Activated CD8-positive, alpha-beta memory T cell treated with anti-CD3 and anti-CD28 coated beads, Interleukin-2, amount 10 ng/mL, durations not matched to agents 7 days and 5 days (primary cell): ENCODE measurements at regions of chr12 and their contacts with region 1.

Region 1: GRCh38 chr12:25241167-25242020 is 9.3 kb downstream of the KRAS start:
- DNase-seq: peak; percentile 72
- ATAC-seq: peak; percentile 88
- H3K4me3 Mint-ChIP-seq: no peak overlapping the region
- H3K27ac Mint-ChIP-seq: peak overlapping the region; percentile 40
- H3K4me1 Mint-ChIP-seq: peaks cover 32% of the 10 kb centered on the region
- H3K27me3 Mint-ChIP-seq: no peaks in the 10 kb centered on the region

Region 2: DNA sequence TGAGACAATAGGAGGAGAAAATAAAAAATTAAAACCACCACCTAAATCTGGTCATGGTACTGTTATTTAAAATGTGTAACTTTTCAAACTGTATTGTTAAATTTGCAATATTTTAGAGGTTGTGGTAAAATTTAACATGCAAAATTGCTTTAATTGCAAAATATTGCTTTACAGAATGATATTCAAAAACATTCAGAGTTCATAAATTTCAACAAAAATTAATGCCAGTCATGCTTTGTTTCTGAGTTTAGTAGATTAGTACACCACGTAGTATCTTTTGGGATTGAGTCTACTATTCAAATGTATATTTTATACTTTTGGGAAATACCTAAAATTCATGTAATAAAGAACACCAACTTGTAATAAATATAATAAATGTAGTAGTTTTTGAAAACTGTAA is 28.1 kb before region 1 on chr12:
- CTCF ChIA-PET with region 1: interaction called, 12 read pairs
- DNase-seq: no peak
- ATAC-seq: no peak
- H3K4me3 Mint-ChIP-seq: no peak overlapping the region
- H3K27ac Mint-ChIP-seq: no peak overlapping the region
- H3K4me1 Mint-ChIP-seq: peaks cover 1% of the 10 kb centered on the region
- H3K27me3 Mint-ChIP-seq: no peaks in the 10 kb centered on the region

Region 3: GRCh38 chr12:25364529-25365339 is 123.3 kb after region 1 on chr12:
- CTCF ChIA-PET with region 1: interaction called, 12 read pairs
- DNase-seq: peak; percentile 82
- ATAC-seq: peak; percentile 91
- H3K4me3 Mint-ChIP-seq: peak overlapping the region; percentile 67
- H3K27ac Mint-ChIP-seq: peak overlapping the region; percentile 89
- H3K4me1 Mint-ChIP-seq: peaks cover 25% of the 10 kb centered on the region
- H3K27me3 Mint-ChIP-seq: no peaks in the 10 kb centered on the region

Region 4: DNA sequence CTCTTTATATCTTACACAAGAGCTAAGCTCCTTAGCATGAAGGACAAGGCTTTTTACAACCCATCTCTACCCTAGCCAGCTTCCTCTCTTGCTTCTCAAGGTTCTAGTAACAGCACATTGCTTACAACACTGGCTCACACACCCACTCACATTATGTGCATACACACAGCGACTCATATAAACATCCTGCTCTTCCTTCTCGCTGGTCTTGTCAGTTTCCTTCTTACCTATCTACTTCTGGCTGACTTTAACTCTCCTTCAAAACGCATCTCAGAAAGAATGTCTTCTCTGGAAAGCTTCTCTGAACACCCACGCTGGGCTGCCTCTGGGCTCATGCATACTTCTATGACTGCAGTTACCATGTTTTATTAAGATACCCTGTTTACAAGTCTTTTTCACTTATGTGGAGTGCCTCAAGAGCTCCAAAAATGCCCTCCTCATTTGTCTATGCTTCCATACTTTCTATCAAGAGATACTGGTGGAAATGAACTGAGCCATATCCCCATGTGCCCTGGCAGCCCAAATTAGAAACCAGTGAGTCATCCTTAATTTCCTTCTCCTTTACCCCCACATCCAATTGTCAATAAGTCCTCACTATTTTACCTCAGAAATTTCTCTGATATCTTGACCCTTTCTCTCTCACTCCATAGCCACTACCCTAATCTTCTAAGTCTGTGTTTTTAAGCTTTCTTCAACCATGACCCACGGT is 136.2 kb after region 1 on chr12:
- CTCF ChIA-PET with region 1: interaction called, 17 read pairs
- DNase-seq: peak; percentile 69
- ATAC-seq: peak; percentile 85
- H3K4me3 Mint-ChIP-seq: peak overlapping the region; percentile 5
- H3K27ac Mint-ChIP-seq: peak overlapping the region; percentile 83
- H3K4me1 Mint-ChIP-seq: peaks cover 70% of the 10 kb centered on the region
- H3K27me3 Mint-ChIP-seq: no peaks in the 10 kb centered on the region

Region 5: GRCh38 chr12:25386831-25387731 is 145.7 kb after region 1 on chr12:
- CTCF ChIA-PET with region 1: interaction called, 17 read pairs
- DNase-seq: peak; percentile 88
- ATAC-seq: peak; percentile 24
- H3K4me3 Mint-ChIP-seq: peak overlapping the region; percentile 85
- H3K27ac Mint-ChIP-seq: peak overlapping the region; percentile 97
- H3K4me1 Mint-ChIP-seq: peaks cover 55% of the 10 kb centered on the region
- H3K27me3 Mint-ChIP-seq: peaks cover 3% of the 10 kb centered on the region